Activated CD8-positive, alpha-beta T cell treated with anti-CD3 and anti-CD28 coated beads for 36 hours (primary cell): ENCODE measurements at regions of chr19 and their contacts with region 1.

Region 1: GRCh38 chr19:1074544-1075283 is 7.7 kb downstream of the ARHGAP45 start:
- DNase-seq: peak; percentile 92
- ATAC-seq: peak; percentile 32
- H3K4me3 Mint-ChIP-seq: peak overlapping the region; percentile 24
- H3K27ac Mint-ChIP-seq: peak overlapping the region; percentile 83
- H3K4me1 Mint-ChIP-seq: peaks cover 58% of the 10 kb centered on the region
- H3K27me3 Mint-ChIP-seq: no peaks in the 10 kb centered on the region
- CTCF ChIP-seq: no peak

Region 2: DNA sequence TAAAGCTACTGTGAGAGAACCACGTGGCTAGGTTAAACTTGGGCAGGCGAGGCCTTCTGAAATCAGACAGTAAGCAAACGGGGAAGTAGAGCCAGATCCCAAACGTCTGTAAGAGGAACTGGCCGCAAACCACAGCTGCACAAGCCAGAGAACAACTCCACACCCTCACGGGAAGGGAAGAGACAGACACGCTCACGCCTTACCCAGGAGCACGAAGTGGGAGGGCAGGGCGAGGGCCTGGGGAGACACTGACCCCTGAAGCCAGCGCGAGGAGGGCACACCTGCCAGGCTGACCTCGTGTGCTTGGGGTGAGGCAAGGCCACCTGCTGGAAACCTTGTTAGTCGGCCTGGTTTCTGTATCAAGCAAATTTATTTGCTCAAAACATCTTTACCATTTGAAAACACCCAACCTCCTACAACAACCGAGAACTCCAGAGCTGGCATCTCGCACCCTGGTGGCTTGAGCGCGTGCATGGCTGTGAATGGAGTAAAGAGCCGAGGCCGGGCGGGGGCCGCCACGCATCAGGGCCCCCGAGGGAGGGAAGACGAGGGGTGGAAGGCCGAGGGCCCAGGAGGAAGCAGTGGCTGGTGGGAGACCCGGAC is 13.2 kb after region 1 on chr19:
- CTCF ChIA-PET with region 1: interaction called, 6 read pairs
- POLR2A ChIA-PET with region 1: interaction called, 148 read pairs
- intact Hi-C with region 1: no loop called
- DNase-seq: peak; percentile 55
- ATAC-seq: peak; percentile 15
- H3K4me3 Mint-ChIP-seq: peak overlapping the region; percentile 2
- H3K27ac Mint-ChIP-seq: peak overlapping the region; percentile 84
- H3K4me1 Mint-ChIP-seq: peaks cover 58% of the 10 kb centered on the region
- H3K27me3 Mint-ChIP-seq: no peaks in the 10 kb centered on the region
- CTCF ChIP-seq: no peak

Region 3: GRCh38 chr19:1094975-1095701 is 20.4 kb after region 1 on chr19 and contains the start of gene POLR2E:
- CTCF ChIA-PET with region 1: interaction called, 3 read pairs
- POLR2A ChIA-PET with region 1: interaction called, 148 read pairs
- intact Hi-C with region 1: no loop called
- DNase-seq: peak; percentile 97
- ATAC-seq: peak; percentile 94
- H3K4me3 Mint-ChIP-seq: peak within 1 kb of the TSS; percentile 90
- H3K27ac Mint-ChIP-seq: peak within 1 kb of the TSS; percentile 87
- H3K4me1 Mint-ChIP-seq: peaks cover 64% of the 10 kb centered on the region
- H3K27me3 Mint-ChIP-seq: no peaks in the 10 kb centered on the region
- CTCF ChIP-seq: no peak
- total RNA-seq, gene POLR2E: 271 to 282 TPM